Sciatic nerve (tissue), 2 donors: ENCODE measurements at regions of chr1 and their contacts with region 1.

Region 1: DNA sequence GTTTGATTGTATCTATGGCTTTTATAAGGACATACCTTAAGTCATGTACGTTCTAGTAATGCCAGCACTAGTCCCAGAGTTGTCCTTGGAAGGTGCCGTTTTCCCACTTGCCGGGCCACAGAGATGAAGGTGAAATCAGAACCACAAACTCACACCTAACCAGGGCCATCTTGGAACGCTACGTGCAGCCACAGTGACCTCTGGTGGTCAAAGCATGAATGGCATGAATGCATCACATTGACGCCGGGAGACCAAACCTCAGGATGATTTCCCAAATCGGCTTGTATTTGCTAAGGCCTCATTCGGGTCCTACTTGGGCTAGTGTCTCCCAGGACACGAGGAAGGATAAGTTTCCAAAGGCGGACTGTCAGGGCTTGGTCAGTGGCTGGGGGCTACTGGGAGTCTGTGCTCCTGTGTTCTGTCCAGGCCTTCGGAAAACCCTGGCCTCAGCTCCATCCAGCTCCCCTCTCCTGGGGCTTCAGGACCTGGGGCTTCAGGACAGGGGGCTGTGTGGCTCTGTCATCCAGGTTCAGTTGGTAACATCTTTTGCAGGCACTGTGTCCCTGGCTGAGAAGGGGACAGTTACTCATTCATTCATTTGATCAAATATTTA is 260.5 kb downstream of the PRDM2 start:
- DNase-seq: peak; percentile 88
- ATAC-seq: peak; percentile 79

Region 2: DNA sequence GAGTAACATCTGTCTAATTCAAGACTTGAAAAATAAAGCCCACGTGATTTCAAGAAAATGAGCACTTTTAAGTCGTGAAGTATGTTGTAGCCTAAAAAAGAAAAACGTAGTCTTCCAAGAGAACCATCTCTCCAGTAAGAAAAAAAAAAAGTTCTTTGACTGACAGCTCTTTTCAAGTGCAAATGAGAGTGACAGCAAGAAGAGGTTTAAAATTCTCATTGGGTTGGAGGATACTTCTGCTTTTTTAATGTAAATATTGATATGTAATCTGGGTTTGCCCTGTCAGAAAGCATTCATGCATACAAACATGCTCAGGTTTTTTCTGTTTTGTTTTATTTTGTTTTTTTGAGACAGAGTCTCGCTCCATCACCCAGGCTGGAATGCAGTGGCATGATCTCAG is 292.8 kb before region 1 on chr1:
- intact Hi-C with region 1: loop called (anchors 5 kb)
- DNase-seq: no peak
- ATAC-seq: no peak

Region 3: DNA sequence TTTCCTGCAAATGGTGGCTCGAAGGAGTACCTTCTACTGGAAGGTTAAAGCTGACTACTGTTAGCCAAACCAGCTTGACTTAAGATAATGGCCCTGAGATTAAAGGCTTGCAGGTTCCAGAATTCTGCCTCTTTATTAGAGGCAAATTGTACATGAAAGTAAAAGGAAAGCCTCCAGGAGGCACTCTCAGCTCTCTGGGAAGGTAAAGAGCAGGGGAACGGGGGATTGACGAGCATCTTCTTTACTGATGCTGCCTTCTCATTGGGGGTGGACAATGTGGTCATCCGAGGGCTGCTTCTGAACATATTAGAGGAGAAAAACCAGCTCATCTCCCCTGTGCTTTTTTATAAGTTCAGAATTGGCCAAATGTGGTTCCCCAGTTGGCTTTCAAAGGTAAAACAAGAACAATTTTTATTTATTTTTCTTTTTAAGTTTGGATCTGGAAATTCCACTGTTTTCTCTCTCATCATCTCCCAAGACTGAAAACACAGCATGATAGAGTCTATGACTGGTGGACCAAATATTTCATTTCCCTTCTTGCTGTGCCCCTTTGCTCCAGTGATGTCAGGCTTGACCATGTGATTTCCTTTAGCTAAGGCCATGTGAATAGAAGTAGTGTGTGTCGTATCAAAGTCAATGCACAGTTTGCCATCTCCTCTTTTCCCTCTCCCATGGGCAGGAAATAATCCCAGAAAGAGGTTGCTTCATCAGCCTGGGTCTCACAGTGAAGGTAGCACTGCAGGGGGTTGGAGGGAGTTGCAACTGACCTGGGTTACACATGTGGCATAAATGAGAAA is 32.2 kb after region 1 on chr1:
- intact Hi-C with region 1: no loop called
- DNase-seq: no peak
- ATAC-seq: no peak